Body of pancreas (tissue), 4 donors: ENCODE measurements at regions of chr10 and their contacts with region 1.

Region 1: GRCh38 chr10:62250594-62251198 is 17.9 kb downstream of the RTKN2 start:
- DNase-seq: no peak
- ATAC-seq: no peak
- H3K4me3 ChIP-seq: no peak overlapping the region
- H3K27ac ChIP-seq: no peak overlapping the region
- H3K4me1 ChIP-seq: no peaks in the 10 kb centered on the region
- H3K27me3 ChIP-seq: no peaks in the 10 kb centered on the region
- CTCF ChIP-seq: no peak
- POLR2A ChIP-seq: no peak

Region 2: GRCh38 chr10:62038609-62039190 is 212.0 kb before region 1 on chr10:
- intact Hi-C with region 1: loop called (anchors 10 kb)
- DNase-seq: peak; percentile 68 to 77 (median 74)
- ATAC-seq: peak; percentile 77
- H3K4me3 ChIP-seq: no peak overlapping the region
- H3K27ac ChIP-seq: peak overlapping the region in 1 of 4 donors; percentile 31
- H3K4me1 ChIP-seq: peaks cover 15% of the 10 kb centered on the region
- H3K27me3 ChIP-seq: no peaks in the 10 kb centered on the region
- CTCF ChIP-seq: peak; percentile 65 to 82 (median 74)
- POLR2A ChIP-seq: no peak